Common myeloid progenitor, CD34-positive (primary cell): ENCODE measurements at regions of chr20 and their contacts with region 1.

Region 1: GRCh38 chr20:50575847-50576720 is 65.9 kb downstream of the PTPN1 start:
- DNase-seq: peak; percentile 69 to 81 (median 81)
- H3K4me3 ChIP-seq: no peak overlapping the region
- H3K27ac ChIP-seq: no peak overlapping the region
- H3K4me1 ChIP-seq: peaks cover 5 to 40% (median 26%) of the 10 kb centered on the region in 4 experiments
- H3K27me3 ChIP-seq: no peaks in the 10 kb centered on the region

Region 2: DNA sequence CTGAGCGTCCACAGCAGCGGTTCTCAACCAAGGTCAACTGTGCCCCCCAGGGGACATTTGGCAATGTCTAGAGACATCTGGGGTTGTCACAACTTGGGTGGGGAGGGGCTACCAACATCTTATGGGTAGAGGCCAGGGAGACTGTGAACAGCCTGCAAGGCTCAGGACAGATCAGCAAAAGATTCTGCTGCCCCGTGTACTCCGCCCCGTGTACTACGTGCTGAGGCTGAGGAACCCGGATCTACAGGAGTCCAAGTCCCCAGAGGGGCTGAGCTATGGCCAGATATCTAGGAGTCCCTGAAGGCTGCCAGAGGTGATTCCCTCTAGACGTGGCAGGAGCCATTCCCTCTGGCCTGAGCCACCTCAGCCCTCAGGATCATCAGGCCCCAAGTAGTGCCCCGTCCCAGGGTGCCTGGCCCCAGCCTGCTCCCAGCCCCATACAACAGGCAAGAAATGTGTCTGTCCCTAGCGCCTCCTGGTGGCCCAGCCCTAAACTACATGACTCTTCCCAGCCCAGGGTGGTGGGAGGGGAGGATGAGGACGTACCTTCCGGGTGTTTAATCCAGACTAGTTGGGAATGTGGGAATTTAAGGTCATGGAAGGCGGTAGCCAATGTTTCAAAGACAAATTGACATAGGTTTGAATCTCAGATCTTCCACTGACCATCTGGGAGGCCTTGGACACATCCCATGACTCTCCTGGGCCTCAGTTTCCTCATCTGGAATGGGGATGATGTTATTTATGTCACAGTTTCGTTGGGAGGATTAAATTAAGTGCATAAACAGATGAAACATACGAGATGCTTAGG is 115.4 kb before region 1 on chr20:
- CTCF ChIA-PET with region 1: interaction called, 149 read pairs
- POLR2A ChIA-PET with region 1: no interaction called
- DNase-seq: peak; percentile 67 to 74 (median 69)
- H3K4me3 ChIP-seq: no peak overlapping the region
- H3K27ac ChIP-seq: no peak overlapping the region
- H3K4me1 ChIP-seq: peaks cover 4 to 36% (median 32%) of the 10 kb centered on the region in 4 experiments
- H3K27me3 ChIP-seq: no peaks in the 10 kb centered on the region

Region 3: DNA sequence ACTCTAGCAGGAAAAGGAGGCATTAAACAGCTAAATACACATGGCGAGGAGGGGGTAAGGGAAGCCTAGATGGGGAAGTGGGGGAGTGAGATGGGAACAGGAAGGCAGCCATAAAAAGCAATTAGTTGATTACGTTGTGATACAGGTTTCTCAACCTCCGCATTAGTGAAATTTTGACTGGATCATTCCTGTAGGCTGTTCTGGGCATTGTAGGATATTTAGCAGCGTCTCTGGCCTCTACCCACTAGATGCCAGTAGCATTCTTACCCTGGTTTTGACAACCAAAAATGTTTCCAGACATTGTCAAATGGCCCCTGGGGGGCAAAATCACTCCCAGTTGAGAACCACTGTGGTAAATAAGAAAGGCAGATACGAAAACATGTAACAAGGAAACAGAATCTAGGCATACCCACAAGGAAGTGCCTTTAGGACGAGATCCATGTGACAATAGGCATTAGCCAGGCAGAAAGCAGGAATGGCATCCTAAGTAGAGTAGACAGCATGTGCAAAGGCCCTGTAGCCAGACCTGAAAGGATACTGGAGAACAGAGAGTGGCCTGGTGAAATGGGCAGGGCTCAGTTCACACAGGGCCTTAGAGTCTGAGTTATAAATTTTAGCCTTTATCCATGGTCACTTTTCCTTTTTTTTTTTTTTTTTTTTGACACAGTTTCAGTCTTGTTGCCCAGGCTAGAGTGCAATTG is 91.7 kb before region 1 on chr20:
- CTCF ChIA-PET with region 1: interaction called, 66 read pairs
- POLR2A ChIA-PET with region 1: interaction called, 4 read pairs
- DNase-seq: no peak
- H3K4me3 ChIP-seq: peak overlapping the region in 3 of 7 experiments; percentile 48 to 72 (median 66)
- H3K27ac ChIP-seq: peak overlapping the region in 1 of 2 experiments; percentile 84
- H3K4me1 ChIP-seq: peaks cover 0 to 20% (median 15%) of the 10 kb centered on the region in 4 experiments
- H3K27me3 ChIP-seq: no peaks in the 10 kb centered on the region

Region 4: GRCh38 chr20:50509935-50510705 is 66.0 kb before region 1 on chr20 and contains the start of gene PTPN1:
- CTCF ChIA-PET with region 1: interaction called, 906 read pairs
- POLR2A ChIA-PET with region 1: interaction called, 3 read pairs
- DNase-seq: peak; percentile 98 to 99 (median 98)
- H3K4me3 ChIP-seq: peak within 1 kb of the TSS; percentile 85 to 99 (median 96)
- H3K27ac ChIP-seq: peak within 1 kb of the TSS; percentile 89 to 93
- H3K4me1 ChIP-seq: peaks cover 23 to 53% (median 35%) of the 10 kb centered on the region in 4 experiments
- H3K27me3 ChIP-seq: no peaks in the 10 kb centered on the region

Region 5: DNA sequence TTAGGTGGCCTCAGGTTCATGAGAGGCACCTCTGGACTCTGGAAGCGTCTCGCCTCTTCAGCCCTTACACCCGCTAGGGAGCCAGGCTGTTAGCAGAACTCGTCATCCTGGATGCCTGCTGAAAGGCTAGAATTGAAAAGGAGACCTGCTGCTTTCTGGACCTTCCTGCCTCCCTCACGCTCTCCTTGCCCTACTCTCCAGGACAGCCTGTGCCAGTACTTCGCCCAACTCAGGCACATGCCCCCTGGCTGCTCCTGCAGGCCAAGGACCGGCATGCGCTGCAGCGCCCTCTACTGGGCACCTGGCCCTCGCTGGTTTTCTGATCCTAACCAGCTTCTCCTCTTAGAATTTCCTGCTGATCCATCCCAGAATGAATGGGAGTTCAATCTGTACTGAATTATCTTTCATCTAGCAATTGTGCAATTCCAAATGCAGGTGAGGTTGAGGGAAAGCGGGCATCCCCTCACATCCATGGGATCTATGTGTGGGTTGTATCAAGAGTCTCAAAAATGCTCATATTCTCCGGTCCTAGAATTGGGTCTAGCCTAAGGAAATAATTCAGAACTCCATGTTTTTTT is 12.0 kb after region 1 on chr20:
- CTCF ChIA-PET with region 1: interaction called, 20 read pairs
- POLR2A ChIA-PET with region 1: no interaction called
- DNase-seq: peak; percentile 59 to 71 (median 68)
- H3K4me3 ChIP-seq: no peak overlapping the region
- H3K27ac ChIP-seq: no peak overlapping the region
- H3K4me1 ChIP-seq: no peaks in the 10 kb centered on the region
- H3K27me3 ChIP-seq: no peaks in the 10 kb centered on the region

Region 6: GRCh38 chr20:50772420-50773185 is 196.5 kb after region 1 on chr20:
- CTCF ChIA-PET with region 1: no interaction called
- POLR2A ChIA-PET with region 1: no interaction called
- DNase-seq: no peak
- H3K4me3 ChIP-seq: no peak overlapping the region
- H3K27ac ChIP-seq: no peak overlapping the region
- H3K4me1 ChIP-seq: no peaks in the 10 kb centered on the region
- H3K27me3 ChIP-seq: no peaks in the 10 kb centered on the region